Activated T-helper 1 cell treated with anti-CD3 and anti-CD28 coated beads, Interleukin-12 subunit alpha, Interleukin-12 subunit beta, Interleukin-2, Interleukin-4 antibody, amounts not matched to agents 30 ng/mL and 10 ng/mL and 1 ng/mL, durations not matched to agents 14 hours and 24 hours and 36 hours (primary cell): ENCODE measurements at regions of chr7 and their contacts with region 1.

Region 1: DNA sequence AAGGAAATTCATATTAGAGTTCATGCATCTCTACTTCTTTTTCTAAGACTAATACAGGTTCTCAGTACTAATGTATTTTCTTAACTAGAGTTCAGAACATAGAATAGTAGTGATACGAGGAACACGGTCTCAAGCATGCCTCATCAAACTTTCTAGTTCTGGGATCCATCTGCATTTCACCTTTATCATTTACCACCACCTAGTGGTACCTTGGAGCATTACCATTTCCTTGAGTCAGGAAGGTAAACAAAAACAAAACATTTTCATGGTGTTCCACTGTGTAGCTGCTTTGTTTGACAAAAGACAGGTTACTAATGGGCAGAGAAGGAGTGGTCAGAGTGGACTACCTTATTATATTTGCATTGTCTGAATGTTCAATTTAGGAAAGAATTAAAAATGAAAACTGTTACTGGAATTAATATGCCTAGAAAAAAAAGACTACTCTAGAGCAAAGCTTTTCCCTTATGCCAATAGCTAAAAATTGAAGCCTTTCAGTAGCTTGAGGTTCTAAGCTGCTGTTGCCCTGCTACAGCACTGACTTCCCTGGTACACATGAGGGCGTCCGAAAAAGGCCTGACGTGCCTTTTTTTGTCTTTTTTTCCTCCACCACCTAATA is 44.5 kb downstream of the STARD3NL start:
- DNase-seq: peak; percentile 25
- H3K4me3 Mint-ChIP-seq: no peak overlapping the region
- H3K27ac Mint-ChIP-seq: no peak overlapping the region
- H3K4me1 Mint-ChIP-seq: peaks cover 35% of the 10 kb centered on the region
- H3K27me3 Mint-ChIP-seq: no peaks in the 10 kb centered on the region

Region 2: GRCh38 chr7:37920305-37920848 is 302.2 kb before region 1 on chr7 and contains the start of gene EPDR1:
- intact Hi-C with region 1: loop called (anchors 10 kb)
- DNase-seq: no peak
- H3K4me3 Mint-ChIP-seq: peak within 1 kb of the TSS; percentile 59
- H3K27ac Mint-ChIP-seq: no peak within 1 kb of the TSS
- H3K4me1 Mint-ChIP-seq: peaks cover 5% of the 10 kb centered on the region
- H3K27me3 Mint-ChIP-seq: peaks cover 57% of the 10 kb centered on the region
- total RNA-seq, gene EPDR1: 0.34 TPM in 1 of 2 replicates, not detected in the other